RWPE1 (cell line): ENCODE measurements at regions of chr3 and their contacts with region 1.

Region 1: GRCh38 chr3:102235679-102236078 is 199.1 kb upstream of the ZPLD1 start:
- DNase-seq: peak; percentile 37
- H3K27ac ChIP-seq: no peak overlapping the region
- CTCF ChIP-seq: peak; percentile 55

Region 2: GRCh38 chr3:102536456-102536855 is 300.8 kb after region 1 on chr3:
- CTCF ChIA-PET with region 1: interaction called, 21 read pairs
- POLR2A ChIA-PET with region 1: no interaction called
- DNase-seq: peak; percentile 41
- H3K27ac ChIP-seq: no peak overlapping the region
- CTCF ChIP-seq: peak; percentile 54